ENCODE measurements at regions of chr3 and their contacts with region 1.

Region 1: GRCh38 chr3:32934150-32934742 is 17.2 kb upstream of the CCR4 start:
- DNase-seq: no peak
- ATAC-seq: no peak

Region 2: DNA sequence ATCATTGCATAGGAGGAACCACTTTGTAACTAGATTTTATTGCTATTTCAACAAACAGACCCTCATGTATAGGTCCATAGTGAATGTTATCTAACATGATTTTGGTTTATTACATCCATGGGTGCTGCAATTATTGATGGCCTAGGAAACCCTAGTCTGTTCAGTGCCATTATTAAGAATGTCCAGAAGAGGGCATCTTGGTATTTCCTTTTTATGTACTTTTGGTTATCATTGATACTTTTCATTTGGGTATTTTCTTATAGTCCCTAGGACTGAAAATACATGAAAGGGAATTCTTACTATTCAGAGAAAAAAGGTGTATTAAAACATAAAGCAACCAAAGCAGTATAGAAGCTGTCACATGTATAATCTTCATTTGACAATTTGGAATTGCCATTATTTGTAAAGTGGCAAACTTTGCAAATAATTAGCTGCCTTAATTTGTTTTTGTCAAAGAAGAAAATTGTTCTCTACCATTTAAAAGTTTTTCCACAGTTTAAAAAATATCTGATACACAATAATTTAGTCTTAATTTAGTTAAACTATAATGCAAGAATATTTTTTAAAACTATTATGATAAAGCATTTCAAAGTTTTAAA is 200.5 kb before region 1 on chr3:
- intact Hi-C with region 1: loop called (anchors 5 to 10 kb)
- DNase-seq: no peak
- ATAC-seq: no peak

Region 3: GRCh38 chr3:33152363-33153360 is 218.4 kb after region 1 on chr3:
- intact Hi-C with region 1: no loop called
- DNase-seq: no peak
- ATAC-seq: no peak

Measured in left cardiac atrium (tissue), 4 donors.